Naive thymus-derived CD4-positive, alpha-beta T cell (primary cell): ENCODE measurements at regions of chr3 and their contacts with region 1.

Region 1: GRCh38 chr3:194141415-194142155 is 5.6 kb downstream of the HES1 start:
- DNase-seq: peak in 7 of 9 donors; percentile 36 to 74 (median 46)
- ATAC-seq: peak; percentile 55
- H3K4me3 ChIP-seq: peak overlapping the region; percentile 40
- H3K4me3 Mint-ChIP-seq: peak overlapping the region; percentile 69 to 91 (median 80)
- H3K27ac ChIP-seq: peak overlapping the region; percentile 42
- H3K27ac Mint-ChIP-seq: peak overlapping the region; percentile 14 to 82 (median 60)
- H3K4me1 ChIP-seq: peaks cover 8 to 21% of the 10 kb centered on the region in 2 donors
- H3K4me1 Mint-ChIP-seq: peaks cover 18 to 41% (median 31%) of the 10 kb centered on the region in 7 donors
- H3K27me3 ChIP-seq: peaks cover 0 to 7% of the 10 kb centered on the region in 2 donors
- H3K27me3 Mint-ChIP-seq: peaks cover 0 to 60% (median 20%) of the 10 kb centered on the region in 5 donors

Region 2: DNA sequence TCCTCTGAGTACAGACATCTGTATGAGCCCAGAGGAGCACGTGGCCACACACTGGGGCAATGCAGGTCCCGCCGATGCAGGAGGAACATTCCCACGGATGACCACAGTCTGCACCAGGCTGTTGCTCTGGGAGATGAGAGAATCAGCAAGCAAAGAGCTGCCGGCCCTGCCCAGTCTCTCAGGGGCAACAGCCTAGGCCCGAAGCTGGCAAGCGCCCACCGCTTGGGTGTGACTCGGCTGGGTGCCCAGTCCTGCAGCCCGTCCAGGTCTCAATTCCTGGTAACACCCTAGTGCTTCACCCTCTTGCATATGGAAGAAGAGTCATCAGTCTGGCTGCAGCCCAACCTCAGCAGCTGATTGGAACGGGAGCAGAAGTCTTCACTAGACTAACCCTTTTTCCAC is 159.3 kb before region 1 on chr3:
- CTCF ChIA-PET with region 1: no interaction called
- POLR2A ChIA-PET with region 1: no interaction called
- intact Hi-C with region 1: no loop called
- DNase-seq: no peak
- ATAC-seq: no peak
- H3K4me3 ChIP-seq: no peak overlapping the region
- H3K4me3 Mint-ChIP-seq: no peak overlapping the region
- H3K27ac ChIP-seq: no peak overlapping the region
- H3K27ac Mint-ChIP-seq: no peak overlapping the region
- H3K4me1 ChIP-seq: no peaks in the 10 kb centered on the region
- H3K4me1 Mint-ChIP-seq: no peaks in the 10 kb centered on the region
- H3K27me3 ChIP-seq: no peaks in the 10 kb centered on the region
- H3K27me3 Mint-ChIP-seq: peaks cover 0 to 40% (median 5%) of the 10 kb centered on the region in 5 donors

Region 3: DNA sequence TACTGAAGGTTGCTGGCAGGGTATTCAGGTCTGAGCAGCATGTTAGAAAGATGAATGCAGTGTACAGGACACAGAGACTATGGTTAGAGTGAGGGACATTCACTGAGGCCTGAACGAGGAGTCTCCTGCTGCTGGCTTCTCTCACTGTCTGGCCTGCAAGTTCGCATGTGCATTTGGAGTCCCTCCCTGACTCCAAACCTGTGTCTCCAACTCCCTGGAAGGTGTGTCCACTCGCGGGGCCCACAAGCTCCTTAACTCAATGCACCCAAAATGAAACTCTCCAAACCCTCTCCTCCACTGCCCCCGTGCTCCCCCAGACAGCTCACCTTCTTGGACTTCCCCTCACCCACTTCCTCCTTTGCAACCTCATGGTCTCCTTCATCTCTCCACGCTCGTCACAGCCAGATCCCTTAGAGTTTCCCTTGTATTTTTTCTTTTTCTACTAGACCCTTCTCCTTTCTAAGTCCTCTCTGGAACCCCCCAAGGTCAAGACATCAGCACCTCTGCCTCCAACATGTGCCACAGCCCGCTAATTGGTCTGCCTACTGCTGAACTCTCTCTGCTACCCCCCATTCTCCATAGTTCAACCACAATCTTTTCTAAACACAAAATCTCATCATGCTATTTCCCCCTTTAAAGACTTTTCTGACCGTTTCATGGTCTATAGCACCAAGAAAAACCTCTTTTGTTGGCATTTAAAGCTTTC is 52.6 kb after region 1 on chr3:
- CTCF ChIA-PET with region 1: no interaction called
- POLR2A ChIA-PET with region 1: no interaction called
- intact Hi-C with region 1: loop called in 1 of 2 experiments (anchors 5 kb)
- DNase-seq: peak in 3 of 9 donors; percentile 9 to 24 (median 10)
- ATAC-seq: peak; percentile 68
- H3K4me3 ChIP-seq: no peak overlapping the region
- H3K4me3 Mint-ChIP-seq: peak overlapping the region in 7 of 10 donors; percentile 2 to 60 (median 21)
- H3K27ac ChIP-seq: no peak overlapping the region
- H3K27ac Mint-ChIP-seq: peak overlapping the region in 3 of 9 donors; percentile 6 to 71 (median 61)
- H3K4me1 ChIP-seq: peaks cover 0 to 4% of the 10 kb centered on the region in 2 donors
- H3K4me1 Mint-ChIP-seq: peaks cover 14 to 35% (median 18%) of the 10 kb centered on the region in 7 donors
- H3K27me3 ChIP-seq: no peaks in the 10 kb centered on the region
- H3K27me3 Mint-ChIP-seq: peaks cover 0 to 14% (median 8%) of the 10 kb centered on the region in 5 donors